ENCODE measurements at regions of chr22 and their contacts with region 1.

Region 1: DNA sequence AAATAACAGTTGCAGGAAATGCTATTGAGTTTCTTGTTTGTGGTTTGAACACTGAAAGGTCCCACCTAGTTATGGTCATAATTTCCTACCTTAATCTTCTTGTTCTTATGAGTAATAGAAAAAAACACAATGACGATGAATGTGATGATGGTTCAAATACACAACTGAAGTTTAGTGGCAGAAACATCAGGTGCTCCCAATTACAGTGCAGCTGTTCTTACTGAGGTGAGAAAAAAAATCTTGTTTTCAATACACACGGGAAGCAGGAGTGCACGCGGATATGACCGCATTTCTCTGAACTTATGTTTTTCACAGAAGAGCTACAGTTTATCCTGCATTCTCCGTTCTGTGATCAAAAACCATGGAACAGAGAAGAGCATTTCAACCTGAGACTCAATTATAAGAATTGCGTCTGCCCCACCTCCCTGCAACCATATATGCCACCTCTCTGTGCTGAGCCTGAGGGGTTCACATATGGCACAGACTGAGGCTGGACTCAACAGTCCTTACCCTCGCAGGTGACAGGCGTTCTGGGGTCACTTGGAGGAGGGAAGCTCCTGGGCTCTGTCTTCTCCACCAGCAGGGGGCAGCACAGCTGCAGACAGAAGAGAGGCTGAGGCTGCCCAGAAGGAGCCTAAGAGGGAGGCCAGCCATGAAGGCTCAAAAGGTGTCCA is 99.7 kb upstream of the IGLL5 start:
- DNase-seq: peak; percentile 39 to 52
- ATAC-seq: peak; percentile 80 to 95; a peak in 5 of 6 replicates
- H3K4me3 ChIP-seq: no peak overlapping the region
- H3K27ac ChIP-seq: no peak overlapping the region
- H3K4me1 ChIP-seq: no peaks in the 10 kb centered on the region
- CTCF ChIP-seq: peak; percentile 58; the same call in 2 of the 3 replicates
- EP300 ChIP-seq: no peak
- POLR2A ChIP-seq: no peak
- RAD21 ChIP-seq: peak; percentile 30 to 46; a peak in 4 of 5 replicates

Region 2: GRCh38 chr22:22770280-22770871 is 17.5 kb before region 1 on chr22:
- CTCF ChIA-PET with region 1: interaction called, 18 read pairs
- POLR2A ChIA-PET with region 1: no interaction called
- DNase-seq: peak; percentile 30 to 33
- ATAC-seq: peak; percentile 83 to 91
- H3K4me3 ChIP-seq: no peak overlapping the region
- H3K27ac ChIP-seq: no peak overlapping the region
- H3K4me1 ChIP-seq: no peaks in the 10 kb centered on the region
- CTCF ChIP-seq: peak; percentile 57
- EP300 ChIP-seq: no peak
- POLR2A ChIP-seq: no peak
- RAD21 ChIP-seq: peak in 1 of 2 experiments; percentile 23; a peak in 2 of 5 replicates

Measured in A549 (cell line).